ENCODE measurements at regions of chr13 and their contacts with region 1.

Region 1: DNA sequence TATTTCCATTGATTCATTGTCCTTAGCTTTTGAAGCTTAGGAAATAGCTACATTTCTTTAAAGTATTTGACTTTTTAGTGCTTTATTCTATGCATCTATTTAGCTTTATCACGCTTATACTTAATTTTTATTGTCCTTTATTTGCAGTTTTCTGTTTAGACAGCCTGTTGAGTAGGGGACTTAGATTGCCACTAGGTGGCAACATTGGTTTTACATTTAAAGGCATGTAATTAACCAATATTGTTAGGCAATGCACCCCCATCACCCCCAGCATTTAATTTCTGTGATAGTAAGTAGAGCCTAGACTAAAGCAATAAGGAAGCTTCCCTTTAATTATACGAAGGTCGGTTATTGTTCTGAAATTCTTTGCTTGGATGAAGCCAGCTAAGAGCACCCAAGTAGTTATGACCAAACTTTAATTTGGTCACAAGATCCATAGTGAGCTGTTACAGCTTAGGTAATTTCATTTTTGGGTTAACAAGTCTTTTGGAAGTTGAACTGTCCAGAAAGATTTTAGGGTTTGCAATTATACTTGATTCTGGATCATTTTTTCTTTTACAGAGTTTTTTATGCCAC is 36.5 kb downstream of the B3GLCT start:
- DNase-seq: no peak
- ATAC-seq: peak in 1 of 4 donors; percentile 39
- H3K4me3 ChIP-seq: no peak overlapping the region
- H3K27ac ChIP-seq: no peak overlapping the region
- H3K4me1 ChIP-seq: no peaks in the 10 kb centered on the region
- H3K27me3 ChIP-seq: no peaks in the 10 kb centered on the region
- CTCF ChIP-seq: peak; percentile 50 to 79 (median 68)
- POLR2A ChIP-seq: no peak

Region 2: GRCh38 chr13:31105020-31105795 is 131.1 kb before region 1 on chr13:
- intact Hi-C with region 1: no loop called
- DNase-seq: no peak
- ATAC-seq: no peak
- H3K4me3 ChIP-seq: no peak overlapping the region
- H3K27ac ChIP-seq: no peak overlapping the region
- H3K4me1 ChIP-seq: peaks cover 0 to 11% (median 0%) of the 10 kb centered on the region in 12 donors
- H3K27me3 ChIP-seq: peaks cover 0 to 6% (median 0%) of the 10 kb centered on the region in 9 donors
- CTCF ChIP-seq: no peak
- POLR2A ChIP-seq: no peak

Region 3: GRCh38 chr13:31409678-31410356 is 173.5 kb after region 1 on chr13:
- intact Hi-C with region 1: loop called in 1 of 10 experiments (anchors 5 kb)
- DNase-seq: no peak
- ATAC-seq: no peak
- H3K4me3 ChIP-seq: no peak overlapping the region
- H3K27ac ChIP-seq: no peak overlapping the region
- H3K4me1 ChIP-seq: no peaks in the 10 kb centered on the region
- H3K27me3 ChIP-seq: peaks cover 0 to 5% (median 0%) of the 10 kb centered on the region in 9 donors
- CTCF ChIP-seq: no peak
- POLR2A ChIP-seq: no peak

Region 4: GRCh38 chr13:31797154-31797775 is 561.0 kb after region 1 on chr13:
- intact Hi-C with region 1: loop called in 1 of 10 experiments (anchors 10 kb)
- DNase-seq: no peak
- ATAC-seq: peak in 1 of 4 donors; percentile 61
- H3K4me3 ChIP-seq: no peak overlapping the region
- H3K27ac ChIP-seq: no peak overlapping the region
- H3K4me1 ChIP-seq: peaks cover 0 to 8% (median 0%) of the 10 kb centered on the region in 12 donors
- H3K27me3 ChIP-seq: no peaks in the 10 kb centered on the region
- CTCF ChIP-seq: peak in 10 of 12 donors; percentile 7 to 59 (median 42)
- POLR2A ChIP-seq: no peak